CD4-positive, alpha-beta memory T cell (primary cell): ENCODE measurements at regions of chr18 and their contacts with region 1.

Region 1: GRCh38 chr18:77000527-77000926 is 132.1 kb downstream of the MBP start:
- DNase-seq: peak in 4 of 5 donors; percentile 42 to 55 (median 44)
- H3K4me3 ChIP-seq: no peak overlapping the region
- H3K4me3 Mint-ChIP-seq: peak overlapping the region in 1 of 8 donors; percentile 0
- H3K27ac ChIP-seq: no peak overlapping the region
- H3K27ac Mint-ChIP-seq: peak overlapping the region in 4 of 7 donors; percentile 16 to 61 (median 32)
- H3K4me1 ChIP-seq: peaks cover 12% of the 10 kb centered on the region
- H3K4me1 Mint-ChIP-seq: peaks cover 14 to 31% (median 18%) of the 10 kb centered on the region in 4 donors
- H3K27me3 ChIP-seq: no peaks in the 10 kb centered on the region
- H3K27me3 Mint-ChIP-seq: no peaks in the 10 kb centered on the region

Region 2: DNA sequence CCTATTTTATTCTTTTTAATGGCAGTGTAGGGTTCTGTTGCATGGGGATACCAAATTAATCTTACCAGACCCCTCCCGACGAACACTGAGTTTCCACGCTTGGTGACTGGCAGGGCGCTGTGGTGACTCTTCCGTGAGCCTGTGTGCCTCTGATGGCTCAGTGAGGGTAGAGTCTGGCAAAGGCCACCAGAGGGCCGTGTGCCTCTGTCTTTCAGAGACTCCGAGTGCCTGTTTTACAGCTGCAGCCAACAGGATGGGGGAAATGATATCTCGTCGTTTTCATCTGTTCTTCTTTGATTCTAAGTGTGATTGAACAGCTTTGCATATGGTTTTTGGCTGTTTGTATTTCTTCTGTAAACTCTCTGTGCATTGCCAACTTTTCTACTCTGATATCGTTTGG is 78.4 kb before region 1 on chr18:
- CTCF ChIA-PET with region 1: no interaction called
- POLR2A ChIA-PET with region 1: no interaction called
- intact Hi-C with region 1: no loop called
- DNase-seq: peak; percentile 43 to 51 (median 47)
- H3K4me3 ChIP-seq: no peak overlapping the region
- H3K4me3 Mint-ChIP-seq: peak overlapping the region in 1 of 8 donors; percentile 47
- H3K27ac ChIP-seq: no peak overlapping the region
- H3K27ac Mint-ChIP-seq: peak overlapping the region in 6 of 7 donors; percentile 8 to 54 (median 33)
- H3K4me1 ChIP-seq: no peaks in the 10 kb centered on the region
- H3K4me1 Mint-ChIP-seq: peaks cover 7 to 21% (median 17%) of the 10 kb centered on the region in 4 donors
- H3K27me3 ChIP-seq: no peaks in the 10 kb centered on the region
- H3K27me3 Mint-ChIP-seq: no peaks in the 10 kb centered on the region

Region 3: GRCh38 chr18:77013811-77014521 is 13.4 kb after region 1 on chr18:
- CTCF ChIA-PET with region 1: interaction called, 26 read pairs
- POLR2A ChIA-PET with region 1: interaction called, 3 read pairs
- intact Hi-C with region 1: no loop called
- DNase-seq: no peak
- H3K4me3 ChIP-seq: no peak overlapping the region
- H3K4me3 Mint-ChIP-seq: no peak overlapping the region
- H3K27ac ChIP-seq: no peak overlapping the region
- H3K27ac Mint-ChIP-seq: peak overlapping the region in 2 of 7 donors; percentile 6 to 57
- H3K4me1 ChIP-seq: no peaks in the 10 kb centered on the region
- H3K4me1 Mint-ChIP-seq: peaks cover 25 to 61% (median 45%) of the 10 kb centered on the region in 4 donors
- H3K27me3 ChIP-seq: no peaks in the 10 kb centered on the region
- H3K27me3 Mint-ChIP-seq: no peaks in the 10 kb centered on the region

Region 4: DNA sequence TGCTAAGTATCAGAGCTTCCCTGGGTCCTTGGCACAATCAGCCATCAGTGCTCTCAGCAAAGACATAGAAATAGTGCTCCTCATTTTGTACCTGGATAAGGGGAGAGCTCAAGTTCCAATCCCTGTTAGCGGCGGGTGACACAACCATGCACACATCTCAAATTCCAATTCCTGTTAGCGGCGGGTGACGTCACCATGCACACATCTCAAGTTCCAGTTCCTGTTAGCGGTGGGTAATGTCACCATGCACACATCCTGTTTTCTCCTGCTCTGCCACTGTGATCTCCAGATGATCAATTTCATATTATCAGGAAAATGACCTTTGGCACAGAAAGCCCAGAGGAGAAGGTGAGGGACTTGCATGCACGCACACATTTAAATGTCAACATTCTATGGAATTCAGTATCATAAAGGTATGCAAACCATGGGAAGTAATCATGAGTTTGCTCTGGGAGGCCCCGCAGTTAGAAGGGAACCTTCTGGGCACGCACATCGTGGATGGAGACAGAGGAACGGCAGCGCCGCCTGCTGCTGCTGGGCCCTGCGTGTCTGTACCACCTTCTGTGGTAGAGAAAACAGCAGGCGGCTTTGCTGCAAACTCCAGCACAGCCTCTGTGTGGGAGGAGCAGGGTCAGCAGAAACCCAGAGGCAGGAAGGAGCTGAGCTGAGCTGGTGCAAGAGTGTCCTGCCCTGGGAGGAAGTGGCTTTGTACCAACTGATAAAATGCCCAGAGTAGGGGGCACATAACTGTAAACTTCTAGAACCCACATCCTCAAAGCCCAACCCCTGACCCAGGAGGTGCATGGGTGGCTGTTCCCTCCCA is 54.3 kb after region 1 on chr18:
- CTCF ChIA-PET with region 1: interaction called, 141 read pairs
- POLR2A ChIA-PET with region 1: interaction called, 14 read pairs
- intact Hi-C with region 1: loop called (anchors 1 kb)
- DNase-seq: peak; percentile 80 to 88 (median 86)
- H3K4me3 ChIP-seq: peak overlapping the region in 1 of 2 donors; percentile 54
- H3K4me3 Mint-ChIP-seq: peak overlapping the region; percentile 72 to 92 (median 86)
- H3K27ac ChIP-seq: peak overlapping the region; percentile 84
- H3K27ac Mint-ChIP-seq: peak overlapping the region; percentile 93 to 100 (median 97)
- H3K4me1 ChIP-seq: peaks cover 83% of the 10 kb centered on the region
- H3K4me1 Mint-ChIP-seq: peaks cover 56 to 79% (median 68%) of the 10 kb centered on the region in 4 donors
- H3K27me3 ChIP-seq: no peaks in the 10 kb centered on the region
- H3K27me3 Mint-ChIP-seq: no peaks in the 10 kb centered on the region

Region 5: DNA sequence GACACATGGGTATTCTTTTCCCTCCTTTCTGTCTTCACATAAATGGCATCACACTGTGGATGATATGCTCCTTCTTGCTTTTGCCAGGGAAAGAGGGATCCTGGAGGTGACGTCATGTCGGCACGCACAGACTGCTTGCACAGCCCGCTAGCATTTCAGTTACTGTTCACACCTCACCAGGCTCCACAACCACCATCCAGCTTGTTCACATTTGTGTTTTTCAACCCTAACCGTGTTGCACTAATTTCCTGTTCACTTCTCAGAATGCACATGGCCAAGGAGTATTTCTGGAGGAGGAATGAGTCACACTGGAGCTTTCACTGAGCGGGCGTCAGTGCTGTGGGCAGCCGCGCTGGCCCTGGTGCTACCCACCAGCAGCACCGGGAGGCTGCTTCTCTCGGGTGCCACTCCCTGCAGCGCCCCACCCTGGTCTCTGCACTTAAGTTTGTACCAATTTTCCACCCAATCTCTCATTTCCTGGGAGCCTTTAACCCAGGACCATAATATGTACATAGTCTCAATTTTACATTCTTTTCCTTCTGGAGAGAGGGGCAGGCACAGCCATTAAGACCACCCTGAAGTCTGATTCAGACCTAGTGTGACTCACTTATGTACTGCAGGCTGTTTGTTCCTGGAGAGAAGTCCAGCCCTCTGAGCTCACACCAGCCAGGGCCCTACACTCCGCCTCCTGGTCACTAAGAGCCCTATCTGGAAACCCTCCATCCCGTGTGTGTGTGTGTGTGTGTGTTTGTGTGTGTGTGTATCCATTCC is 66.9 kb after region 1 on chr18:
- CTCF ChIA-PET with region 1: interaction called, 23 read pairs
- POLR2A ChIA-PET with region 1: interaction called, 12 read pairs
- intact Hi-C with region 1: loop called (anchors 2 kb)
- DNase-seq: peak; percentile 52 to 77 (median 62)
- H3K4me3 ChIP-seq: peak overlapping the region in 1 of 2 donors; percentile 26
- H3K4me3 Mint-ChIP-seq: peak overlapping the region; percentile 76 to 87 (median 81)
- H3K27ac ChIP-seq: peak overlapping the region; percentile 78
- H3K27ac Mint-ChIP-seq: peak overlapping the region; percentile 97 to 100 (median 99)
- H3K4me1 ChIP-seq: peaks cover 100% of the 10 kb centered on the region
- H3K4me1 Mint-ChIP-seq: peaks cover 89 to 100% (median 95%) of the 10 kb centered on the region in 4 donors
- H3K27me3 ChIP-seq: no peaks in the 10 kb centered on the region
- H3K27me3 Mint-ChIP-seq: no peaks in the 10 kb centered on the region

Region 6: DNA sequence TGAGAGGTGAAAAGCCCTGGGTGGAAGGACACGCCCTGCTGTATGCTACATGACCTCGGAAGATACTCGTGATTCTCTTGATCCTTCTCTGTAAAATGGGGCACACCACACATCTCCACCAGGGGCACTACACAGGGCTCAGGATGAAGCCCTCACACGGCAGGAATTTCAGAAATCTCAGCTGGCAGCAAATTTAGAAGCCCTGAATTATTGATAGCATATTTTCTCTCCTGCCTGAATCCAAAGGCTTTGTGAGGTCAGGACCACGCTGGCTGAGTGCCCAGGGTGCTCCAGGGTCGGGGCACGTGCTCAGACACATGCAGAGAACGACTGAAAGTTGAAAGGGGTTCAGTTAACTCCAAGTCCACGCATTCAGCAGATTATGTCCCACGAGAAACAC is 207.0 kb after region 1 on chr18:
- CTCF ChIA-PET with region 1: interaction called, 88 read pairs
- POLR2A ChIA-PET with region 1: interaction called, 21 read pairs
- intact Hi-C with region 1: loop called (anchors 1 kb)
- DNase-seq: peak; percentile 55 to 79 (median 67)
- H3K4me3 ChIP-seq: no peak overlapping the region
- H3K4me3 Mint-ChIP-seq: peak overlapping the region; percentile 60 to 80 (median 72)
- H3K27ac ChIP-seq: no peak overlapping the region
- H3K27ac Mint-ChIP-seq: peak overlapping the region; percentile 41 to 92 (median 85)
- H3K4me1 ChIP-seq: peaks cover 37% of the 10 kb centered on the region
- H3K4me1 Mint-ChIP-seq: peaks cover 29 to 52% (median 41%) of the 10 kb centered on the region in 4 donors
- H3K27me3 ChIP-seq: no peaks in the 10 kb centered on the region
- H3K27me3 Mint-ChIP-seq: peaks cover 0 to 4% of the 10 kb centered on the region in 2 donors

Region 7: GRCh38 chr18:77650799-77651385 is 650.4 kb after region 1 on chr18:
- CTCF ChIA-PET with region 1: interaction called, 5 read pairs
- POLR2A ChIA-PET with region 1: no interaction called
- intact Hi-C with region 1: loop called (anchors 2 kb)
- DNase-seq: peak in 4 of 5 donors; percentile 35 to 54 (median 38)
- H3K4me3 ChIP-seq: no peak overlapping the region
- H3K4me3 Mint-ChIP-seq: no peak overlapping the region
- H3K27ac ChIP-seq: no peak overlapping the region
- H3K27ac Mint-ChIP-seq: no peak overlapping the region
- H3K4me1 ChIP-seq: no peaks in the 10 kb centered on the region
- H3K4me1 Mint-ChIP-seq: peaks cover 0 to 2% (median under 1%) of the 10 kb centered on the region in 4 donors
- H3K27me3 ChIP-seq: no peaks in the 10 kb centered on the region
- H3K27me3 Mint-ChIP-seq: peaks cover 13 to 16% of the 10 kb centered on the region in 2 donors